PC-9 (cell line): ENCODE measurements at regions of chr19 and their contacts with region 1.

Region 1: GRCh38 chr19:3544742-3545668 is 6.0 kb downstream of the TEKTIP1 start:
- DNase-seq: peak; percentile 48 to 68
- H3K4me3 ChIP-seq: no peak overlapping the region
- H3K27ac ChIP-seq: no peak overlapping the region
- H3K4me1 ChIP-seq: no peaks in the 10 kb centered on the region
- H3K27me3 ChIP-seq: no peaks in the 10 kb centered on the region
- CTCF ChIP-seq: peak; percentile 86

Region 2: DNA sequence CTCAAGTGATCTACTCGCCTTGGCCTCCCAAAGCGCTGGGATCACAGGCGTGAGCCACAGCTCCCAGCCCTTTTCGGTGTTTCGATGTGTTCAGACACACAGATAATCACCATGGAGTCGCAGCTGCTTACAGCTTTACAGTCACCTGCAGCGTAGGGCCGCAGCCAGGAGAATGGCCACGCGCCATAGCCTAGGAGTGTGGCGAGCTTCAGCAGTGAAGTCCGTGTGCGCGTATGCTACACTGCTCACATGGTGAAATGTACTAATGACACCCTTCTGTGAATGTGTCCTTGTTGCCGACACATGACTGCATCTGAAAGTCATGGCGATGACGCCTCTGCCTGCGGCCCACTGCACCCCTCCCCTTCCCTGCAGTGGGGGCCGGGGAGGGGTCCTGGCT is 1417.2 kb before region 1 on chr19:
- CTCF ChIA-PET with region 1: no interaction called
- POLR2A ChIA-PET with region 1: no interaction called
- intact Hi-C with region 1: no loop called
- DNase-seq: no peak
- H3K4me3 ChIP-seq: no peak overlapping the region
- H3K27ac ChIP-seq: no peak overlapping the region
- H3K4me1 ChIP-seq: no peaks in the 10 kb centered on the region
- H3K27me3 ChIP-seq: no peaks in the 10 kb centered on the region
- CTCF ChIP-seq: no peak

Region 3: GRCh38 chr19:3577611-3578415 is 32.8 kb after region 1 on chr19:
- CTCF ChIA-PET with region 1: no interaction called
- POLR2A ChIA-PET with region 1: interaction called, 13 read pairs
- intact Hi-C with region 1: no loop called
- DNase-seq: no peak
- H3K4me3 ChIP-seq: no peak overlapping the region
- H3K27ac ChIP-seq: no peak overlapping the region
- H3K4me1 ChIP-seq: no peaks in the 10 kb centered on the region
- H3K27me3 ChIP-seq: no peaks in the 10 kb centered on the region
- CTCF ChIP-seq: no peak

Region 4: DNA sequence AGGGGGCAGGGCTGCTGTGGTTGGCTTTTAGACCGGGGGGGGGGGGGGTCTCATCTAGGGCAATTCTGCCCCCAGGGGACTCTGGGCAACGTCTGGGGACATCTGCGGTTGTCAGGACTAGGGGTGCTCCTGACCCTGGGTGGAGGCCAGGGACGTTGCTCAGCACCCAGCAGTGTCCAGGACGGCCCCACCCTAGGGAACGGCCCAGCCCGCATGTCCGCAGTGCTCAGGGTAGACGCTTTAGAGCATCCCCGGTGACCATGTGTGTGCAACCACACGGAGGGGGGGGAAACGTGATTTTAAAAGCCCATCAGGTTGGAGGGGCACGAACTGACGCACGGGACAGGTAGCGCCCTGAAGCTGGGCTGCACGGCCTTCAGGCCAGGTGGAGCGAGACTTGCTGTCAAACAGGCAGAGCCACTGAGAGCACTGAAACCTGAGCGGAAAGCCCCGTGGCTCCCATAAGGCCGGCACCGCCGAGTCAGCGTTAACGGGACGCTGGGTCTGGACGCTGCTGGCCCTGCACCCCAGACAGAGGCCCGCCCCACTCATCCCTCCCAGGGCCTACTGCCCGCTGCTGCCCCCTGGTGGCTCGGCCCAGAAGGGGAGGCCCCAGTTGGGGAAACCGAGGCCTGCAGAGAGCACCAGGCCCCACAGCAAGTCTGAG is 73.3 kb after region 1 on chr19:
- CTCF ChIA-PET with region 1: no interaction called
- POLR2A ChIA-PET with region 1: no interaction called
- intact Hi-C with region 1: loop called (anchors 1 kb)
- DNase-seq: peak in 1 of 2 experiments; percentile 33
- H3K4me3 ChIP-seq: no peak overlapping the region
- H3K27ac ChIP-seq: no peak overlapping the region
- H3K4me1 ChIP-seq: no peaks in the 10 kb centered on the region
- H3K27me3 ChIP-seq: no peaks in the 10 kb centered on the region
- CTCF ChIP-seq: peak; percentile 81

Region 5: GRCh38 chr19:3880471-3881271 is 335.7 kb after region 1 on chr19 and contains the start of gene ATCAY:
- CTCF ChIA-PET with region 1: no interaction called
- POLR2A ChIA-PET with region 1: no interaction called
- intact Hi-C with region 1: no loop called
- DNase-seq: no peak
- H3K4me3 ChIP-seq: no peak within 1 kb of the TSS
- H3K27ac ChIP-seq: no peak within 1 kb of the TSS
- H3K4me1 ChIP-seq: no peaks in the 10 kb centered on the region
- H3K27me3 ChIP-seq: no peaks in the 10 kb centered on the region
- CTCF ChIP-seq: no peak
- total RNA-seq, gene ATCAY: not detected in 2 replicates